Activated CD8-positive, alpha-beta memory T cell treated with anti-CD3 and anti-CD28 coated beads, Interleukin-2, amount 10 ng/mL, durations not matched to agents 7 days and 5 days (primary cell): ENCODE measurements at regions of chr2 and their contacts with region 1.

Region 1: GRCh38 chr2:46650556-46651001 is 171.2 kb downstream of the TMEM247 start:
- DNase-seq: peak; percentile 77
- ATAC-seq: peak; percentile 86
- H3K4me3 Mint-ChIP-seq: no peak overlapping the region
- H3K27ac Mint-ChIP-seq: no peak overlapping the region
- H3K4me1 Mint-ChIP-seq: no peaks in the 10 kb centered on the region
- H3K27me3 Mint-ChIP-seq: peaks cover 10% of the 10 kb centered on the region

Region 2: DNA sequence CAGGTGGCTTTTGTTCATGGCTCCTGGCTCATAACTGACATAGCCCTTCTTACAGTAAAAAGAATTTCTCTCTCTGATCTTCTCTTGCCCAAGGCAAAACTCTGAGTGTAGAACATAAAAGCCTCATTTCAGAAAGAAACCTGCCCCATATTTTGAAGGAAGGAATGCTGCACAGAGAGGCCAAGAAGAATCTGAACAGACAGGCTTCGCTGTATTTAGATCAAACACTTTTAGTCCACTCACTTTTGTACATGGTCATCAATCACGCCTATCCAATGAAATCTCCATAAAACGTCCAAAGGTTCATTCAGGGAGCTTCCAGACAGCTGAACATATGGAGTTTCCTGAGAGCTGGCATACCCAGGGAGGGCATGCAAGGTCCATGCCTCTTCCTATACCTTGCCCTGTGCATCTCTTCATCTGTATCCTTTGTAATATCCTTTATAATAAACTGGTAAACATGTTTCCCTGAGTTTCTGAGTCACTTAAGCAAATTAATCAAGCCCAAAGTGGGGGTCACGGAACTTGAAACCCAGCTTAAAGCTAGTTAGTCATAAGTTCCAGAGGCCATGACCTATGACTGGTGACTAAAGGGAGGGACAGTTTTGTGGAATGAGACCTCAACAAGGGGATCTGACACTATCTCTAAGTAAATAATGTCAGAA is 233.7 kb before region 1 on chr2:
- CTCF ChIA-PET with region 1: no interaction called
- DNase-seq: no peak
- ATAC-seq: no peak
- H3K4me3 Mint-ChIP-seq: no peak overlapping the region
- H3K27ac Mint-ChIP-seq: no peak overlapping the region
- H3K4me1 Mint-ChIP-seq: peaks cover 3% of the 10 kb centered on the region
- H3K27me3 Mint-ChIP-seq: peaks cover 3% of the 10 kb centered on the region

Region 3: DNA sequence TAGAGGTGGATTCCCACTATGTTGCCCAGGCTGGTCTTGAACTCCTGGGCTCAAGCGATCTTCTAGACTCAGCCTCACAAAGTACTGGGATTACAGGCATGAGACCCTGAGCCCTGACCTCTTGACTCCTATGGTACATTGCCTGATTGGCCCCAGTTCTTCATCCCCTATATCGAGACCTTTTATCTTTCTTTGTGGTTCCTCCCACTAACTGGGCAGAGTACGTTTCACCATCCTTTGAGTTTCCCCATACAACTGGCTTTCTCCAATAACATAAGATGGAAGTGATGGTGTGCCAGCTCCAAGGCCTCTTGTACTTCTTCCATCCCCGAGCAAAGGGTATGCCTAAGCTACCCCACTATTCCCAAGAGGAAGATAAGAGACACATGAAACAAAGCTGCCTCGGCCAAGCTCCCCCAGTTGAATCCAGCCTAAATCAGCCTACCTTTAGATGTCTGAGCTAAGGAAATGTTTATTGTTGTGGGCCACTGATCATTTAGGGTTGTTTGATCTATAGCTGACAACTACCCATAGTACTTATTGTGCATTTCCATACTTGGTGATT is 179.5 kb before region 1 on chr2:
- CTCF ChIA-PET with region 1: no interaction called
- DNase-seq: no peak
- ATAC-seq: no peak
- H3K4me3 Mint-ChIP-seq: no peak overlapping the region
- H3K27ac Mint-ChIP-seq: no peak overlapping the region
- H3K4me1 Mint-ChIP-seq: peaks cover 14% of the 10 kb centered on the region
- H3K27me3 Mint-ChIP-seq: peaks cover 15% of the 10 kb centered on the region

Region 4: GRCh38 chr2:46569061-46569560 is 81.5 kb before region 1 on chr2:
- CTCF ChIA-PET with region 1: no interaction called
- DNase-seq: no peak
- ATAC-seq: no peak
- H3K4me3 Mint-ChIP-seq: no peak overlapping the region
- H3K27ac Mint-ChIP-seq: no peak overlapping the region
- H3K4me1 Mint-ChIP-seq: peaks cover 2% of the 10 kb centered on the region
- H3K27me3 Mint-ChIP-seq: no peaks in the 10 kb centered on the region

Region 5: GRCh38 chr2:46634905-46635304 is 15.7 kb before region 1 on chr2:
- CTCF ChIA-PET with region 1: interaction called, 11 read pairs
- DNase-seq: no peak
- ATAC-seq: peak; percentile 92
- H3K4me3 Mint-ChIP-seq: no peak overlapping the region
- H3K27ac Mint-ChIP-seq: peak overlapping the region; percentile 27
- H3K4me1 Mint-ChIP-seq: peaks cover 9% of the 10 kb centered on the region
- H3K27me3 Mint-ChIP-seq: no peaks in the 10 kb centered on the region